ENCODE measurements at regions of chr11 and their contacts with region 1.

Region 1: DNA sequence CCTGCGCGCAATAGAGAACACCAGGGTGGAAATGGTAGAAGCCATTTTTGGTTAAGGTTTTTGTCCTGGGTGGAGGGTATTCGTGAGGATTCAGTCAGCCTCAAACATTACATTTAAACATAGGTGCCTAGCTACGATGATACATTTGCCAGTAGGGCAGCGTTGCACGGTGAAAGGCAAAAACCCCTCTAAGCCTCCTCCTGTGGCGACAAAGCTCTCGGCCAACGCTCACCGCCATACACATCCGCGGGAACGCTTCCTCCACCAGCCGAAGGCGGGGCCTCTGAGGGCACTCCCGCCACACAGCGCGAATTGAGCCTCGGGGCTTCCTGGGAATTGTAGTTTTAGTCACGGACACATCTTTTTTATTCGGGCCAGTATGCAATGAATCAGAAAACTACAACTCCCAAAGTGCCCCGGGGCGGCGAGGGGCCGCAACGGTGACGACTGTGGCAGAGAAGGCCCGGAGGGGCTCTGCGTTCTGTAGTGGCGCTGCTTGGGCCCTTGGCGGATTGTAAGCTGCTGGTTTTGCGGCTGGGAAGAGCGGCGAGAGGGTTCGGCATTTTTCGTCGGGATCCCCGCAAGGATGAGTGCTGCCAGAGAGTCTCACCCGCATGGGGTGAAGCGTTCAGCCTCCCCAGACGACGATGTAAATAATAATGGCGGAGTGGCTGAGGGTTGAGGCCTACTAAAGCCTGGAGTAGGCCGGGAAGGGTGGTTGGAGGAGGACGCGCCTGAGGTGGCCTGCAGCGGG is at the start of gene C11orf58:
- DNase-seq: peak; percentile 93
- H3K4me3 Mint-ChIP-seq: peak within 1 kb of the TSS; percentile 73
- H3K27ac Mint-ChIP-seq: peak within 1 kb of the TSS; percentile 88
- H3K4me1 Mint-ChIP-seq: peaks cover 32% of the 10 kb centered on the region
- H3K27me3 Mint-ChIP-seq: no peaks in the 10 kb centered on the region
- total RNA-seq, gene C11orf58: 150 and 152 TPM in 2 replicates

Region 2: GRCh38 chr11:16749666-16750065 is 11.3 kb after region 1 on chr11:
- intact Hi-C with region 1: loop called (anchors 1 kb)
- DNase-seq: no peak
- H3K4me3 Mint-ChIP-seq: no peak overlapping the region
- H3K27ac Mint-ChIP-seq: peak overlapping the region; percentile 55
- H3K4me1 Mint-ChIP-seq: peaks cover 34% of the 10 kb centered on the region
- H3K27me3 Mint-ChIP-seq: no peaks in the 10 kb centered on the region

Region 3: GRCh38 chr11:16785520-16786128 is 47.3 kb after region 1 on chr11:
- intact Hi-C with region 1: loop called (anchors 1 kb)
- DNase-seq: peak; percentile 31
- H3K4me3 Mint-ChIP-seq: no peak overlapping the region
- H3K27ac Mint-ChIP-seq: no peak overlapping the region
- H3K4me1 Mint-ChIP-seq: no peaks in the 10 kb centered on the region
- H3K27me3 Mint-ChIP-seq: peaks cover 2% of the 10 kb centered on the region

Region 4: DNA sequence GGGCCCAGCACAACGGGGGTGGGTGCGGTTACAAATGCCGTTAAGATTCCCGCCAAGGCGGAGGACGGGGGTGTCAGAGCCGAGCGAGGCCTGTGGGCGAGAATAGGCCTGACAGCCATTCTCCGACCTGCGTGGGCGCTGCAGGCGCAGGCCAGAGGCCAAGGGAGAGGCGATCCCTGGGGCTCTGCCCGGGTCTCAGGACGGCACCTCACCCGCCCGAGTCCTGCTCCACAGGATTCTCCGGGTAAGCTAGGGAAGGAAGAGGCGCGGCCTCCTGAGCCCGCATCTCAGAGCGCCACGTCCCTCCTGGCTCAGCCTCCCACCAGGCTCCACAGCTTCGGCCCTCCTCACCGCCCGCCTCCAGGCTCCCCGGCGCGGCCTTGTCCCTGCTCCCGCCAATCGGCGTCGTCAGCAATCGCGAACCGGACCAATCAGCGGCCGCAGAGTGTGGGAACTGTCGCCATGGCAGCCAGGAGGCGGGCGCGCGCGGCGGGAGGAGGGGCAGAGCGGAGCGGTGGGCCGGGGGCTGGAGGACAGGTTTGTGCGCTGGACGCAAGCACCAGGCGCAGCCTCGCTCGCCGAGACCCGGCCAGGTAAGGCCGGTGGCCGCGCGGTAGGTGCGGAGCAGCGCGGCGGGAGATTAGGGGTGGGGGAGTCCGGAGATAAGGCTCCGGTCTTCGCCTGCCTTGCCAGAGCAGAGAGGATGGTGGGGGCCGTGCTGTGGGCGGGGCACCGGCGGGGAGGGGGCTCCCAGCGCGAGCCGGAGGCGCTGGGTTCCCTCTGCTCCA is 538.1 kb after region 1 on chr11 and contains the start of gene NUCB2:
- intact Hi-C with region 1: loop called (anchors 5 kb)
- DNase-seq: peak; percentile 95
- H3K4me3 Mint-ChIP-seq: peak within 1 kb of the TSS; percentile 87
- H3K27ac Mint-ChIP-seq: peak within 1 kb of the TSS; percentile 77
- H3K4me1 Mint-ChIP-seq: peaks cover 48% of the 10 kb centered on the region
- H3K27me3 Mint-ChIP-seq: peaks cover 3% of the 10 kb centered on the region
- total RNA-seq, gene NUCB2: 51.1 and 61.7 TPM in 2 replicates

Measured in activated T-helper 1 cell treated with anti-CD3 and anti-CD28 coated beads, Interleukin-12 subunit alpha, Interleukin-12 subunit beta, Interleukin-2, Interleukin-4 antibody, amounts not matched to agents 30 ng/mL and 10 ng/mL and 1 ng/mL, durations not matched to agents 14 hours and 24 hours and 36 hours (primary cell).